ENCODE measurements at regions of chr4 and their contacts with region 1.

Region 1: GRCh38 chr4:38675146-38676121 is 11.4 kb downstream of the KLF3 start:
- DNase-seq: peak; percentile 57 to 85 (median 81)
- ATAC-seq: peak; percentile 75
- H3K4me3 ChIP-seq: peak overlapping the region; percentile 25
- H3K4me3 Mint-ChIP-seq: peak overlapping the region; percentile 48 to 99 (median 81)
- H3K27ac ChIP-seq: peak overlapping the region; percentile 98
- H3K27ac Mint-ChIP-seq: peak overlapping the region in 8 of 9 donors; percentile 82 to 100 (median 94)
- H3K4me1 ChIP-seq: peaks cover 45 to 70% of the 10 kb centered on the region in 2 donors
- H3K4me1 Mint-ChIP-seq: peaks cover 61 to 97% (median 90%) of the 10 kb centered on the region in 7 donors
- H3K27me3 ChIP-seq: no peaks in the 10 kb centered on the region
- H3K27me3 Mint-ChIP-seq: peaks cover 0 to 3% (median 0%) of the 10 kb centered on the region in 5 donors

Region 2: DNA sequence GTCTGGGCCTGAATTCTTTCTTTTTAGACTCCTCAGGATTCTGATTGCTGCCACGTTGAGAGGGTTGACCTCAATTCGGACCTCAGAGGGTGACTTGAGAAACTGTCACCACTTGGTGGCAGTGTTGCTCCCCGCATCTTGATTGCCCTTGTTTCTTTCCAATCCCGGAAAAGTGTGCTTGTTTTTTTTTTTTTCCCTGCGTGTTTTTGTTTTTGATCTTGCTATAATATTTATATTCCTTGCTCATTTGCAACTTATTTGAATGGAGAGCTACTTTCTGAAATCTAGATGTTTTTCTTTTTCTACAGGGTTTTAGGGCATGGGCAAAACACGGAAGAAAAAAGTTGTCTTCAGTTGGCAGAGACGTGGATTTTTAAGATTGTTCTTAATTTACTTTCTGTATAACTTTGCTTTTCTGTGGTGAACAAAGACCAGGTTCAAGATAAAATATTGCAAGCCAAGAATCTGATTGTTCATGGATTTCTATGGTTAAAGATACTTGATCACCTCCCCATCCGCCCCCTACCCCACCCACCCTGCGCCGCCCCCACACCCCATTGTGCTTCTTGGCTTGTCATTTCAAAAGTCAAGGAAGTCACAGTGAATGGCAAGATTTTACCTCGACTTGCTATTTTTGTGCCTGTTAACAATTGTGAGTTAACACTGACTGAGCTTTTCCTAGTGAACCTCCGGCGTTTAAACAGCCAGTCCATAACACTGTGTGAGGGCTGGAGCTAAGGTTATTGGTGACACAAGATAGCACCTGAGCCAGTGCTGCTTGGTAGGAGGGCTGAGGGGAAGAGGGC is 613.1 kb before region 1 on chr4:
- CTCF ChIA-PET with region 1: no interaction called
- POLR2A ChIA-PET with region 1: no interaction called
- intact Hi-C with region 1: loop called (anchors 1 kb)
- DNase-seq: peak; percentile 15 to 55 (median 41)
- ATAC-seq: peak; percentile 78
- H3K4me3 ChIP-seq: peak overlapping the region; percentile 33
- H3K4me3 Mint-ChIP-seq: peak overlapping the region; percentile 66 to 95 (median 84)
- H3K27ac ChIP-seq: no peak overlapping the region
- H3K27ac Mint-ChIP-seq: peak overlapping the region in 8 of 9 donors; percentile 35 to 80 (median 61)
- H3K4me1 ChIP-seq: no peaks in the 10 kb centered on the region
- H3K4me1 Mint-ChIP-seq: peaks cover 0 to 20% (median 10%) of the 10 kb centered on the region in 7 donors
- H3K27me3 ChIP-seq: no peaks in the 10 kb centered on the region
- H3K27me3 Mint-ChIP-seq: no peaks in the 10 kb centered on the region

Region 3: DNA sequence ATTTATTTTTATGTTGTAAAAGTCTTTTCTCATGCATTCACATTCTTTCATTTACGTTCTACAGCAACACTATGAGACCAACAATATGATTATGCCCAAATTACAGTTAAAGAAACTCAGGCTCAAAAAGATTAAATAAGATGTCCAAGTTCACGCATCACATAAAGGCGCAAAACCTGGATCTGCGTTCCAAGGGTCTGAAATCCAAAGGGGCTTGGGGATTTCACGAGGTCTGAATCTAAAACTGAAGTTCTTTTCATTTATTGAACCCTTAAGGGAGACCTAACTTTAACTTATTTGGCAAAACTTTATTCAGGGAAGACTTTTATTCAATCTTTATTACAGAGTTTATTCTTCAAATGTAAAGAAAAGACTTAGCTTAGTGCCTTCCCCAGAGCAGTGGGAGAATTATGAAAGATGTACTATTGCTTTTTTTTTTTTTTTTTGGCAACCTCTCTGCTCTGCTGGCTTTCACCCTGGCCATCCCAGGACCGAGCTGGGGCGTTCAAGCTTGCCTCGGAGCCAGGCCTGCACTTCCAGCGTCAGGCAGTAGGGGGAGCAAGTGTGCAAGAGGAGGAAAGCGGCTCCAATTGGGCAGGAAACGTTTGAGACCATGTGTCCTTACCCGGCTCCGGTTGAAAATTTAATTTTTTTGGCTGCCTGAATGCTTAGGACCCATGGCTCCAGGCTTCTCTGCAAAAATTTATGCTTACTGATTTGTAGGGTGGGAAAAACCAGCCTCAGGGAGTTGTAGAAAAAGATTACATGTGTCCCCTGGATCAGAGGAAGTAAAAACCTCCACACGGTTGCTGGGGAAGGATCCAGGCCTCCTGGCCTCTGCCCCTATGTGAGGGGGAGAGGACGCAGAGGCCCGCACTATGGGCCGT is 355.7 kb before region 1 on chr4:
- CTCF ChIA-PET with region 1: interaction called, 68 read pairs
- POLR2A ChIA-PET with region 1: interaction called, 35 read pairs
- intact Hi-C with region 1: loop called (anchors 1 kb)
- DNase-seq: peak; percentile 73 to 96 (median 83)
- ATAC-seq: peak; percentile 91
- H3K4me3 ChIP-seq: peak overlapping the region; percentile 38
- H3K4me3 Mint-ChIP-seq: peak overlapping the region; percentile 80 to 95 (median 88)
- H3K27ac ChIP-seq: peak overlapping the region; percentile 68
- H3K27ac Mint-ChIP-seq: peak overlapping the region; percentile 87 to 98 (median 94)
- H3K4me1 ChIP-seq: peaks cover 19 to 35% of the 10 kb centered on the region in 2 donors
- H3K4me1 Mint-ChIP-seq: peaks cover 33 to 75% (median 70%) of the 10 kb centered on the region in 7 donors
- H3K27me3 ChIP-seq: no peaks in the 10 kb centered on the region
- H3K27me3 Mint-ChIP-seq: peaks cover 0 to 10% (median 0%) of the 10 kb centered on the region in 5 donors

Region 4: GRCh38 chr4:38514465-38515146 is 160.8 kb before region 1 on chr4:
- CTCF ChIA-PET with region 1: interaction called, 10 read pairs
- POLR2A ChIA-PET with region 1: interaction called, 14 read pairs
- intact Hi-C with region 1: loop called in 1 of 2 experiments (anchors 2 kb)
- DNase-seq: peak in 2 of 9 donors; percentile 18 to 20
- ATAC-seq: no peak
- H3K4me3 ChIP-seq: peak overlapping the region; percentile 38
- H3K4me3 Mint-ChIP-seq: peak overlapping the region; percentile 57 to 94 (median 80)
- H3K27ac ChIP-seq: no peak overlapping the region
- H3K27ac Mint-ChIP-seq: peak overlapping the region in 8 of 9 donors; percentile 27 to 93 (median 74)
- H3K4me1 ChIP-seq: peaks cover 50 to 54% of the 10 kb centered on the region in 2 donors
- H3K4me1 Mint-ChIP-seq: peaks cover 35 to 96% (median 85%) of the 10 kb centered on the region in 7 donors
- H3K27me3 ChIP-seq: no peaks in the 10 kb centered on the region
- H3K27me3 Mint-ChIP-seq: peaks cover 0 to 35% (median 0%) of the 10 kb centered on the region in 5 donors

Region 5: GRCh38 chr4:38625508-38625907 is 49.9 kb before region 1 on chr4:
- CTCF ChIA-PET with region 1: no interaction called
- POLR2A ChIA-PET with region 1: no interaction called
- intact Hi-C with region 1: loop called in 1 of 2 experiments (anchors 2 kb)
- DNase-seq: peak in 7 of 9 donors; percentile 26 to 59 (median 33)
- ATAC-seq: peak; percentile 67
- H3K4me3 ChIP-seq: no peak overlapping the region
- H3K4me3 Mint-ChIP-seq: peak overlapping the region in 8 of 10 donors; percentile 9 to 57 (median 39)
- H3K27ac ChIP-seq: no peak overlapping the region
- H3K27ac Mint-ChIP-seq: peak overlapping the region in 7 of 9 donors; percentile 53 to 81 (median 70)
- H3K4me1 ChIP-seq: peaks cover 0 to 9% of the 10 kb centered on the region in 2 donors
- H3K4me1 Mint-ChIP-seq: peaks cover 8 to 27% (median 21%) of the 10 kb centered on the region in 7 donors
- H3K27me3 ChIP-seq: no peaks in the 10 kb centered on the region
- H3K27me3 Mint-ChIP-seq: peaks cover 0 to 4% (median 0%) of the 10 kb centered on the region in 5 donors

Region 6: DNA sequence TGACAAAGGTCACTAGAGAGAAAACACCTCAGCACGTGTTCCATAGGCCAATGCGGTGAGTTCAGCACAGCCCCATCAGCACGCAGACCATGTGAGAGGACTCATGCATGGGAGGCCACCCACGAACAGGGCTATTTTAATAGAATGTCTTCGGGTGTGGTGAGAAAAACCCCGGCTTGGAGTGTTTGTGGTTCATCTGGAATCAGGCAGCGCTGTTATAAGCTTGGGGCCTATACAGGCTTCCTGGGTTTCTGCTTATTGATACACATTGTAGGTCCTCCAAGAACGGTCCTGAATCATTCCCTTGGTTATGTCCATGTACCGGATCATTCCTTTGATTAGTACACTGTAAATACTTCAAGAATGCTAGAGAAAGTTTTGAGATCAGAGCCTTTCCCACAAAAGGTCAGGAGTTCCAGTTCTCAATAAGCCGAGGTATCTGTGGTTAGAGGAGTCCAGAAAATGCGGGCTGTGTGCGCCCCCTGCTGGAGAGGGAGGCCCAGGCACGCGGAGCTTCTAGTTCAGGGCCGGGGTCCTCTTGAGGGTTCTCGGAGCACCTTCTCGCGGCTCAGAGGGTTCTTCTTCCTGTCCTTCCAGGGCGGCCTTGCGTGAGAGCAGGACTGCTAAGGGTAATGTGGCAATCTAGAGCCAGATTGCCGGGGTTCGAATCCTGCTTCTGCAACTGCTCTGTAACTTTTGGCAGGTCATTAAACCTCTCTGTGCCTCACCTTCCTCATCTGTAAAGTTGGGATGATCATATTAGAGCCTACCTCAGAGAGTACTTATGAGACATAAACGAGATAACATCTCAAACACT is 55.6 kb after region 1 on chr4:
- CTCF ChIA-PET with region 1: interaction called, 23 read pairs
- POLR2A ChIA-PET with region 1: no interaction called
- intact Hi-C with region 1: loop called (anchors 1 kb)
- DNase-seq: peak; percentile 63 to 86 (median 77)
- ATAC-seq: peak; percentile 88
- H3K4me3 ChIP-seq: no peak overlapping the region
- H3K4me3 Mint-ChIP-seq: no peak overlapping the region
- H3K27ac ChIP-seq: no peak overlapping the region
- H3K27ac Mint-ChIP-seq: peak overlapping the region in 2 of 9 donors; percentile 25 to 31
- H3K4me1 ChIP-seq: peaks cover 0 to 7% of the 10 kb centered on the region in 2 donors
- H3K4me1 Mint-ChIP-seq: peaks cover 7 to 20% (median 16%) of the 10 kb centered on the region in 7 donors
- H3K27me3 ChIP-seq: no peaks in the 10 kb centered on the region
- H3K27me3 Mint-ChIP-seq: peaks cover 0 to 12% (median 0%) of the 10 kb centered on the region in 5 donors

Measured in naive thymus-derived CD4-positive, alpha-beta T cell (primary cell).